T-cell (primary cell): ENCODE measurements at regions of chr19 and their contacts with region 1.

Region 1: DNA sequence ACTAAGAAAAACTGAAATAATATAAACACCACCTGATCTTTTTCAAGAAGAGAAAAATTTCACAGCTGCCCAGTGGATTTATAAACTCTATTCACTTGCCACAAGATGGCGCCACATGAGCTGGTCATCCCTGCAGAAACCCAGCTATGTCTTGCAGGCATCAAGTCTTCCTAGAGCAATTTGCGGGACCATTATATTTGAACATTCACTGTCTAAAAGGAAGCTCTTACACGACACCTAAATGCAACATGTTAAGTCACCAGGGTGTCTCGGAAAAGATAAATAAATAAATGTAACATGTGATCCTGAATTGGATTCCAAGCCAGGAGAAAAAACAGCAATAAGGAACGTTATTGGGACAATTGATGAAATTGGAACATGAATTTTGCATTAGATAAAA is 20.3 kb upstream of the AKT2 start:
- DNase-seq: peak; percentile 35 to 85 (median 65)
- ATAC-seq: peak; percentile 58 to 69 (median 62)
- H3K4me3 ChIP-seq: no peak overlapping the region
- H3K4me3 Mint-ChIP-seq: no peak overlapping the region
- H3K27ac ChIP-seq: no peak overlapping the region
- H3K27ac Mint-ChIP-seq: no peak overlapping the region
- H3K4me1 ChIP-seq: no peaks in the 10 kb centered on the region
- H3K4me1 Mint-ChIP-seq: peaks cover 0 to 3% (median 3%) of the 10 kb centered on the region in 3 donors
- H3K27me3 ChIP-seq: no peaks in the 10 kb centered on the region
- H3K27me3 Mint-ChIP-seq: no peaks in the 10 kb centered on the region

Region 2: DNA sequence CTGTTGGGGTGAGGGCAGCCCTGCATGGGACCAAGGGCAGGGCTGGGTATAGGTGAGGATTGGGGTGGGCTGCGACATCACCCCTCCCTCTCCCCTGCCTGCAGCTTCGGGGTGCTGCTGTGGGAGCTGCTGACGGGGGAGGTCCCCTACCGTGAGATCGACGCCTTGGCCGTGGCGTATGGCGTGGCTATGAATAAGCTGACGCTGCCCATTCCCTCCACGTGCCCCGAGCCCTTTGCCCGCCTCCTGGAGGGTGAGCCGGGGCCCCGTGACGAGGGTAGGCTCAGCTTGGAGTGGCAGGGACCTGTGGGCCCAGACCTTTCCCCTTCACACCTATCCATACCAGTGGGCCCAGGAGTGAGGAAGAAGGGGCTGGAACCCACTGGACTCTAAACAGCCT is 101.0 kb before region 1 on chr19:
- CTCF ChIA-PET with region 1: no interaction called
- POLR2A ChIA-PET with region 1: no interaction called
- DNase-seq: no peak
- ATAC-seq: no peak
- H3K4me3 ChIP-seq: no peak overlapping the region
- H3K4me3 Mint-ChIP-seq: no peak overlapping the region
- H3K27ac ChIP-seq: no peak overlapping the region
- H3K27ac Mint-ChIP-seq: no peak overlapping the region
- H3K4me1 ChIP-seq: no peaks in the 10 kb centered on the region
- H3K4me1 Mint-ChIP-seq: no peaks in the 10 kb centered on the region
- H3K27me3 ChIP-seq: no peaks in the 10 kb centered on the region
- H3K27me3 Mint-ChIP-seq: no peaks in the 10 kb centered on the region

Region 3: GRCh38 chr19:40521276-40521675 is 215.9 kb after region 1 on chr19:
- CTCF ChIA-PET with region 1: interaction called in 1 of 2 experiments, 11 read pairs
- POLR2A ChIA-PET with region 1: no interaction called
- DNase-seq: peak in 2 of 35 experiments; percentile 23 to 38
- ATAC-seq: no peak
- H3K4me3 ChIP-seq: no peak overlapping the region
- H3K4me3 Mint-ChIP-seq: no peak overlapping the region
- H3K27ac ChIP-seq: no peak overlapping the region
- H3K27ac Mint-ChIP-seq: no peak overlapping the region
- H3K4me1 ChIP-seq: no peaks in the 10 kb centered on the region
- H3K4me1 Mint-ChIP-seq: peaks cover 0 to 5% (median 4%) of the 10 kb centered on the region in 3 donors
- H3K27me3 ChIP-seq: peaks cover 6 to 42% of the 10 kb centered on the region in 2 experiments
- H3K27me3 Mint-ChIP-seq: peaks cover 21 to 27% of the 10 kb centered on the region in 2 donors

Region 4: DNA sequence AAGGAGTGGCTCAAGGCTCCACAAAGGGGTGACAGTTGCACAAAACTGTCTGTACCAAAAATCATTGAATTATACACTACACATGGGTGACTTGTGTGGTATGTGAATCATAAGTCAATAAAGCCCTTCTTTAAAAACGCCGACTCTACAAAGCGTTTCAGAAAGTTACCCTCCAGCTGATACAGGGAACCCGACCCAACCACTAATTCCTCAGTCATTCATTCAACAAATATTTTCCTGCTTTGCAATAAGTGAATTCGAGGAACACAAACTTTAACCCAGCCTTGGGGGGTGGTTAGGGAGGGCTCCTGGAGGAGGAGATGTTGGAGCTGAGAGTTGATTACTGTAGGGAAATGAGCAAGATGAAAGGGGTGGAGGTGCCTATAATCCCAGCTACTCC is 327.8 kb after region 1 on chr19:
- CTCF ChIA-PET with region 1: interaction called in 1 of 2 experiments, 17 read pairs
- POLR2A ChIA-PET with region 1: no interaction called
- DNase-seq: no peak
- ATAC-seq: no peak
- H3K4me3 ChIP-seq: no peak overlapping the region
- H3K4me3 Mint-ChIP-seq: no peak overlapping the region
- H3K27ac ChIP-seq: no peak overlapping the region
- H3K27ac Mint-ChIP-seq: no peak overlapping the region
- H3K4me1 ChIP-seq: peaks cover 0 to 12% of the 10 kb centered on the region in 2 experiments
- H3K4me1 Mint-ChIP-seq: peaks cover 7 to 25% (median 9%) of the 10 kb centered on the region in 3 donors
- H3K27me3 ChIP-seq: peaks cover 0 to 14% of the 10 kb centered on the region in 2 experiments
- H3K27me3 Mint-ChIP-seq: peaks cover 0 to 3% of the 10 kb centered on the region in 2 donors